Tibial artery (tissue), 4 donors: ENCODE measurements at regions of chr9 and their contacts with region 1.

Region 1: DNA sequence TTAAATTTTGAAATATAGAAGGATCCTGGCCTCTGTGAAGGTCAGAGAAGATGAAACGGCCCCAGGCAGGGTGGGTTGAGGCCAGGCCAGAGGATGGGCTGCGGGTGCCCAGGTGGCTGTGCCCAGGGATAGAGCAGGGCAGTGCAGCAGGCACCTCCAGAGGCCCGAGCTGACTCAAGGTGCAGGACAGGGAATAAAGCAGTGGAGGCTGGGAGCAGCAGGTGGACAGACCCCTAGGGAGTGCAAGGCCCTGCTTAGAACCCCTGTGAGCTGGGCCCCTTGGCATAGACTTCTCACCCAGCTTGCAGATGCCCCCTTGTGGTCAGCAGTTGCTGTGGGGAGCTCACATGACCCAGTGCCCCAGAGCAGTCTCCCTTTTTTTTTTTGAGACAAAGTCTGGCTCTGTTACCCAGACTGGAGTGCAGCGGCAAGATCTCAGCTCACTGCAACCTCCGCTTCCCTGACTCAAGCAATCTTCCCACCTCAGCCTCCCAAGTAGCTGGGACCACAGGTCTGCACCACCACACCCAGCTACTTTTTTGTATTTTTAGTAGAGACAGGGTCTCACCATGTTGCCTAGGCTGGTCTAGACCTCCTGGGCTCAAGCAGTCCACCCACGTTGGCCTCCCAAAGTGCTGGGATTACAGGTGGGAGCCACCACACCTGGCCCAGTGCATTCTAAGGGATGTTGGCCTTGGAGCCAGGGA is 118.8 kb downstream of the WNK2 start:
- DNase-seq: peak; percentile 45 to 63
- H3K4me3 ChIP-seq: no peak overlapping the region
- H3K27ac ChIP-seq: no peak overlapping the region
- H3K4me1 ChIP-seq: no peaks in the 10 kb centered on the region
- H3K27me3 ChIP-seq: peaks cover 0 to 7% of the 10 kb centered on the region in 2 donors
- CTCF ChIP-seq: peak; percentile 35 to 39

Region 2: DNA sequence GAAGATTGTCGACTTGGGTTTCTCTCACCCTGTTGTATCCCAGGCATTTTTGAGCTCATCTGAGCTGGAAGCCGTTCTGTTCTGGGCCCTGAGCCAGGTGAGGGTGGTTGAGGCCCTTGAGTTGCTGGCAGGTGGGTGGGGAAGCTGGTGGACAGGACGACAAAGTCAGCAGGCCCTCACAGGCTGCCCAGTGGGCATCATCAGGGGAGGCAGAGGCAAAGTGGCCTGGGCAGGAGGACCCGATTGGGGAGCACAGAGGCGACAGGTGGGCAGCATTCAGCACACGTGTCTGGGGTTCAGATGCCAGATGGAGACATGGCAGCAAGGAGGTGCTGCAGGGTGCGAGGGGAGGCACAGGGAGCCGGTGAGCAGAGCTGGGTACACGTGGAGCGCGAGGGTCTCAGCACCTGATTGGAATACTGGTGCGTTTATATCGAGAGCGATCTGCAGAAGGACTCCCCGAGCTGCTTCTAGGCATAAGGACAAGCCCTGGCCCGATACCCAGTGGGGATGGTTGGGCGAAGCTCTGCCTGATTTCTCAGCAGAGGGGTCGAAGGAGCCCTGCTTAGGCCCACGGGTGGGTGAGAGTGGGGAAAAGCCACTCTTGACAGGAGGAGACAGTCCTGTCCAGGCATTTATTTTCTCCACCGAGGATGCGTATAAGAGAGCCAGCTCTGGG is 293.2 kb before region 1 on chr9:
- intact Hi-C with region 1: loop called (anchors 5 kb)
- DNase-seq: no peak
- H3K4me3 ChIP-seq: no peak overlapping the region
- H3K27ac ChIP-seq: no peak overlapping the region
- H3K4me1 ChIP-seq: no peaks in the 10 kb centered on the region
- H3K27me3 ChIP-seq: peaks cover 0 to 28% of the 10 kb centered on the region in 2 donors
- CTCF ChIP-seq: no peak

Region 3: GRCh38 chr9:93159601-93160471 is 142.9 kb before region 1 on chr9:
- intact Hi-C with region 1: loop called (anchors 5 kb)
- DNase-seq: peak; percentile 76 to 89
- H3K4me3 ChIP-seq: no peak overlapping the region
- H3K27ac ChIP-seq: no peak overlapping the region
- H3K4me1 ChIP-seq: peaks cover 0 to 8% (median 3%) of the 10 kb centered on the region in 4 donors
- H3K27me3 ChIP-seq: no peaks in the 10 kb centered on the region
- CTCF ChIP-seq: peak; percentile 95 to 98